ENCODE measurements at regions of chr6 and their contacts with region 1.

Region 1: DNA sequence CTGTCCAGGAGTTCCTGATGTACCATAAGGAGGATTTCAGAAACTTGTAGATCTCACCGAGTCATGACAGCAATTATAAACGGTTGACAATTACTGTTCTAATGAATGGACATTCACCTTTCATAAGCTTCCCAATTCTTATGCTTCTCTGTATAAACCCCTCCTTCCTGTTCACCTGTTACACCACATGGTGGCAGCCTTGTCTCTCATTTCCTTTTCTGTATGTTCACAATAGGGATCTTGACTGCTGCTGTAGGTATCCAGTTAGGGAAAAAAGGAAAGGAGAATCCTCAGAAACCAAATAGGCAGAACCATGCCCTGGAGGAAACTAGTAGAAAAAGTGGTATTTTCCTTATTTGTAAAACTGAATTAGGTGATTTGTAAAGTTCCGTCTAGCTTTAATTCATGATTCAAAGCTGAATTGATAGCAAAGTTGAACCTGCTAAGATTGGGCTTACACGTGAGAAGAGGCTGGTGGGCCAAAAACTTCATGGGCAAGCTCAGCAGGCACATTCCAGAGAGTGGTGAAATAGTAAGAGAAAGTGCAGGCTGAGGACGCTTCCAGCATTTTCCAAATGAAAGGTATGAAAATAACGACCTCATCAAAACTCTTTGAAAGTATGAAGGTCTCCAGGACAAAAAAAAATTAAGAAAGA is 29.0 kb upstream of the TBPL1 start:
- DNase-seq: peak; percentile 54
- CTCF ChIP-seq: peak; percentile 70

Region 2: DNA sequence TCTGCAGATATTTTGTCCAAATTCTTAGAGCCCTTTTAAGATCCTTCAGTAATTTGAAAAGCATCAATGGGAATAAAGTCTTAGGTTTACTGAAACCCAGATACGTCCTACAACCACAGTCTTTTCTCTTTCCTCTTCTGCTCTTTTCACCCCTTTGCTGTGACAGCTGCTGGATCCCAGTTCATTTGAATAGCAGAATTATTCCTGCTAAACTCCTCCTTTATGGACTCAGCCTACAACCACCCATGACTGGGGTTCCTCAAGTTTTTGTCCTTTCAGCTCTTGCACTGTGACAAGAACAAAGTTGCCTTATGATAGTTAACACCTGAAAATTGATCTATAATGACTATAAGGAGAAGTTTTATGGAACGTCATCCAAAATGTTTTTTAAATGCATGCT is 445.4 kb before region 1 on chr6:
- CTCF ChIA-PET with region 1: no interaction called
- POLR2A ChIA-PET with region 1: no interaction called
- DNase-seq: no peak
- CTCF ChIP-seq: no peak

Region 3: DNA sequence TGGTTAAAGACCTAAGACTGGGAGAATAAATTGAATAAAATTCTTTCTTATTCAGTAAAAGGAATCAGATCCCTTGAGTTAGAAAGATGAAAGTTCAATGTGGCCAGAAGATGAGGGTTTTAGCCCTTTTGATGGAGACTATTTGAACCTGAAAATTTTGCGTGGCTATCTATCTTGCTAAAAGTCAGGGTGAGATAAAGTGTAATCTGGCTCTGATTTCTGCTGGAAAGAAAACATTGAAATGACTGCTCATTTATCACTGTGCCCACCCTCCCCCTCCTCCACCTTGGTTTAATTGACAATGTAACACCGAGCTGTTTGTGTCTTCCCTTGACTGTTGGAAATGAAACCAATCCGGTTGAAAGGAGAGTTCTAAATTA is 68.1 kb before region 1 on chr6:
- CTCF ChIA-PET with region 1: no interaction called
- POLR2A ChIA-PET with region 1: no interaction called
- DNase-seq: no peak
- CTCF ChIP-seq: no peak

Region 4: DNA sequence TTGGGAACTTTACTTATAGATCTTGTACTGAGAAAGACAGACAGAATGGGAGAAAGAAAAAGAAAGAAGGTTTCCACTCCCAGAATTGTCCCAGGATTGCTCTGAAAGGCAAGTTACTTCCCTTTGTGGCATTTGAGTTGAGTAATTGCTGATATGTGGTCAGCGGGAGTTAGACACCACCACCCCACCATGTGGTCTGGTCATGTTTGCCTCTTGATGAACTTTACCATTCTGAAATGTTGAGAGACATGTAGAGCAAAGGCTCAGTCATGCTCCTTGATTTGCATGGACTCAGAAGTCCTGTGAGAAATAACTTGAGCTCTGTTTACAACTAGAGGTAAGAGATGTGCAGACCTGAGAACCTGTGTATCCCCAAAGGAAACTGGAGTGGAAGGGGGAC is 18.0 kb before region 1 on chr6:
- CTCF ChIA-PET with region 1: interaction called, 26 read pairs
- POLR2A ChIA-PET with region 1: no interaction called
- DNase-seq: no peak
- CTCF ChIP-seq: no peak

Region 5: DNA sequence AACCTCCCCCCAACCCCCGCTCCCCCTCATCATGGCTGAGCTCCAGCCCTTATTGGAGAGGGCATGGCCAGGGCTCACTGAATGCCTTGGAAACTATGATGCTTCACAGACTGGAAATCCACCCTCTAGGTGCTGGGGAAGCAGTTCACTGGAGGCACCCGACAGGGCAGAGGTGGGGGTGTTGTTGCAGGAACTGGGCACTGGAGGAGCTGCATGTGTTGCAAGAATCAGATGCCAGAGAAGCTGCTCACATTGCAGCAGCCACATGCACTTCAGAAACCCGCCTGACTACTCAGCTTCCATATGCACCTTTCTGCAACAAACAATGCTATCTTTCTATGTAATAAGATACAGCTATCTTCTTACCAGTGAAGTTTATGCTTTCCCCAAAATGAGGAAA is 21.1 kb after region 1 on chr6:
- CTCF ChIA-PET with region 1: interaction called, 51 read pairs
- POLR2A ChIA-PET with region 1: no interaction called
- DNase-seq: no peak
- CTCF ChIP-seq: no peak

Region 6: DNA sequence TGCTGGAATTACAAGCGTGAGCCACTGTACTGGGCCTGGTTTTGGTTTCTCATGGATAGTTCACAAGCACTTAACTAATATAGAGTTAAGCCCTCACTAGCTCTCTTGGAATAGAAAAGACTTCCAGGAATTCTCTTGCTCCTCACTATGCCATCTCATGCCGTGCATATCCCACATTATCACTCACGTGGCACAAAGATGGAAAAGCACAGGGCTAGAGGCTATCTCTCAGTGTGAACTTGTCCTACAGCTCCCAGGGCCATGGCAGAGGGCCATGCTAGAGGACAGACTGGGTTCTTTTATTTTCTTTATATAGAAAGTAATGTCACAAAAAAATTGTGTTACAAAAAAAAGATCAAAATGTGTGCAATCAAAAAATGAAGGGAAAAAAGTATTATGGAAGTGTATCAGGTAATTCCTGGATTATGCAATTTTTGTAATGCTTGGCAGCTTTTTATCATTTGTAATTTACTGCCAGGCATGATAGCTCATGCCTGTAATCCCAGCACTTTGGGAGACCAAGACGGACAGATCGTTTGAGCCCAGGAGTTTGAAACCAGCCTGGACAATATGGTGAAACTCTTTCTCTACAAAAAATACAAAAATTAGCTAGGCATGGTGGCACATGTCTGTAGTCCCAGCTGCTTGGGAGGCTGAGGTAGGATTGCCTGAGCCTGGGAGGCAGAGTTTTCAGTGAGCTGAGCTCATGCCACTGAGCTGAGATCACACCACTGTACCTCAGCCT is 134.7 kb after region 1 on chr6:
- CTCF ChIA-PET with region 1: interaction called, 122 read pairs
- POLR2A ChIA-PET with region 1: no interaction called
- DNase-seq: no peak
- CTCF ChIP-seq: no peak